HepG2 (cell line): ENCODE measurements at regions of chr10 and their contacts with region 1.

Region 1: GRCh38 chr10:12561307-12561706 is 212.0 kb downstream of the CAMK1D start:
- DNase-seq: no peak
- ATAC-seq: no peak
- H3K4me3 ChIP-seq: no peak overlapping the region
- H3K27ac ChIP-seq: no peak overlapping the region
- H3K4me1 ChIP-seq: no peaks in the 10 kb centered on the region
- H3K27me3 ChIP-seq: peaks cover 0 to 19% of the 10 kb centered on the region in 2 experiments; a peak in 1 of 5 replicates
- CTCF ChIP-seq: no peak
- EP300 ChIP-seq: no peak
- POLR2A ChIP-seq: no peak
- RAD21 ChIP-seq: no peak

Region 2: DNA sequence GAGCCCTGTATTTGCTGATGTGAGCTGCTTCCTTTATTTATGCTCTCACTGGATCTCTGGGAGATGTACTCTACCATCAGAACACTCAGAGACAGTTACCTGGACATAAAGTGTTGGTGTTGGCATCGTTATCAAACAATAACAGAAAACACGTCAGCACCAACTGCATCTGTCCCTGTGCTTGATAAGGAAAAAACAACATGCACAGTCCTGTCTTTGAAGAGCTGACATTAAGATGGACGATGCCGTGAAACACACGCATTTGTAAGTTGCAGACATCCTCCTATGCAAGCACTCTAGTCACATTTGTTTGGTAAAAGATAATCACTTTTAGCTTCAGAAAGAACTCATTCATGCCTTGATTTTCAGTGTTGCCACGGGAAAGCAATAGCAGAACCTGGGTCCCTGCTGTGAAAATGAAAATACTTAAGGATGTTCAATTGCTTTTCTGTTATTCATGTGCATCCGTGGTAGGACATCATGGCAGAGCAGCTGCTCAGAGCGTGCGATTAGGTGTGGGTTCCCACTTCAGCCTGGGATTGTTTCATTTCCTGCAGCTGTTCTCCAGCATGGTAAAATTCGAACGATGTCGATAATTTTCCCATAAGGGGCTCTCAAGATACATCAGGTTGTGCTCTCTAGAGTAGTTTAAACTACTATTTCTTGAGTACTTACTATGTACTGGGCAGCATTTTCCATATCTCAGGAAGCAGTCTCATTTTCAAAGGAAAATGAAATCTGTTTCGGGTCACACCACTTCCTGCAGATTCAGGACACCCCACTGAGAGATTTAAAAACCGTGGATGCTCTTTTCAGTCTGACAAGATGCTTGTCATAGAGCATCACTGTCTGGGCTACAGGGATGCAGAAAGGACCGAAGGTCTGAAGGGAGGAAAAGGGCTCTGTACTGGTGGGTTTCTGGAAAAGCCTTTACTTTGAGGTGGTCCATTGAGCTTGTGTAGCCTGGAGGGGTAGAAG is 36.8 kb after region 1 on chr10:
- CTCF ChIA-PET with region 1: no interaction called
- POLR2A ChIA-PET with region 1: no interaction called
- in situ Hi-C with region 1: no loop called
- intact Hi-C with region 1: loop called (anchors 1 kb)
- DNase-seq: no peak
- ATAC-seq: no peak
- H3K4me3 ChIP-seq: no peak overlapping the region
- H3K27ac ChIP-seq: no peak overlapping the region
- H3K4me1 ChIP-seq: no peaks in the 10 kb centered on the region
- H3K27me3 ChIP-seq: peaks cover 2% of the 10 kb centered on the region in 2 experiments; a peak in 2 of 5 replicates
- CTCF ChIP-seq: no peak
- EP300 ChIP-seq: no peak
- POLR2A ChIP-seq: no peak
- RAD21 ChIP-seq: no peak

Region 3: GRCh38 chr10:12768156-12769100 is 207.1 kb after region 1 on chr10:
- CTCF ChIA-PET with region 1: no interaction called
- POLR2A ChIA-PET with region 1: no interaction called
- in situ Hi-C with region 1: no loop called
- intact Hi-C with region 1: no loop called
- DNase-seq: no peak
- ATAC-seq: no peak
- H3K4me3 ChIP-seq: no peak overlapping the region
- H3K27ac ChIP-seq: no peak overlapping the region
- H3K4me1 ChIP-seq: peaks cover 13% of the 10 kb centered on the region
- H3K27me3 ChIP-seq: no peaks in the 10 kb centered on the region
- CTCF ChIP-seq: no peak
- EP300 ChIP-seq: no peak
- POLR2A ChIP-seq: no peak
- RAD21 ChIP-seq: no peak